ENCODE measurements at regions of chr1 and their contacts with region 1.

Region 1: DNA sequence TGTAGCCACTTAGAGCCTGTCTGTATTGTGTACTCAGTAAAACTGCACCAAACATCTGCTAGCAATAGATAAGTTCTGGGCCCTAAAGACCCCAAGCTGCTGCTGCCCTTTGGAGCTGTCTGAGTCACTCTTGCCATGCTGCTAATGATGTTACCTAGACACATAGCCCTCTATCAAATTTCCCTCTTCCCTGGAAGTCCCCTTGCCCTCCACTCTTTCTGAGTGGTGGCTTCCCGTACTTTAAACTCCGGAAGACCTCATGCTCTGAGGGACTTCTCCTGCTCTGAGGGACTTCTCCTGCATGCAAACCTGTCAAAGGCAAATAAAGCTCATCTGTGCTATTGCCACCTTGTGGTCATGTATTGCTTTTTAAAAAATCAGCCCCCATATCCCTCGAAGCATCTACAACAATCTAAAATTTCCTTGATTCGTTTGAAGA is 34.0 kb downstream of the FH start:
- DNase-seq: no peak
- H3K4me3 ChIP-seq: no peak overlapping the region
- CTCF ChIP-seq: peak; percentile 53

Region 2: GRCh38 chr1:240701412-240701811 is 784.2 kb before region 1 on chr1:
- in situ Hi-C with region 1: loop called (anchors 25 kb)
- DNase-seq: peak; percentile 70
- H3K4me3 ChIP-seq: no peak overlapping the region
- CTCF ChIP-seq: no peak